MCF 10A (cell line): ENCODE measurements at regions of chr5 and their contacts with region 1.

Region 1: DNA sequence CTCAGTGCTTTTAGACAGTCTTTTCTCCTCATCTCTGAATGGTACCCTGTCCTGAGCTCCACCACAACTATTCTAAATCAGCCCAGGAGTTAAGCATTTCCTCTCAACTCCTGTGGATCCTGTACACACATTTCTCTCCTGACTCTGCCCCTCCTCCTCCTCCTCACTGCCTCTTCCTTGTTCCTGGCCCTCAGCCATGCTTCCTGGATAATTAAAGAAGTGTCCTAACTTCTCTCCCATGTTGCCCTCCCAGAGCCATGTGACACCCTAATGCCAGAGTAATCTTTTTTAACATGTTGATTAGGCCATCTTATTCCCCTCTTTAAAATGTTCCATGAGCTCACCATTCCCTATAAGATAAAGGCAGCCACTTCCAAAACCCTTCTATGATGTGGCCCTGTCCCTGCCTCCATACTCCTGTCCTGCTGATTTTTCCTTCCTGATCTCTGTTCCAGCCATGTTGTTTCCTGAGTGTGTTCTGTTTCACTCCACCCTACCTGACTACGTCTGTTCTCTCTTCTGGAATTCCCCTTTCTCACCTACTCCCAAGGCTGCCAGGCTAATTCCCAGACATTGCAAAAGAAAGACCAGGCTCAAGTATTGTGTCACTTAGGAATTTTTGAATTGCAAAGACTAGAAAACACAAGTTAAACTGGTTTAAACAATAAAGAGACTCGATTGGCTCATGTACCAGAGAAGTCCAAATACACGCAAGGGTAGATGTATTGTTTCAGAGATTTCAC is 295.2 kb downstream of the MAST4 start:
- DNase-seq: peak; percentile 95
- H3K4me3 Mint-ChIP-seq: peak overlapping the region; percentile 32
- H3K27ac Mint-ChIP-seq: peak overlapping the region; percentile 100
- H3K4me1 Mint-ChIP-seq: peaks cover 42% of the 10 kb centered on the region
- H3K27me3 Mint-ChIP-seq: no peaks in the 10 kb centered on the region
- CTCF ChIP-seq: no peak

Region 2: DNA sequence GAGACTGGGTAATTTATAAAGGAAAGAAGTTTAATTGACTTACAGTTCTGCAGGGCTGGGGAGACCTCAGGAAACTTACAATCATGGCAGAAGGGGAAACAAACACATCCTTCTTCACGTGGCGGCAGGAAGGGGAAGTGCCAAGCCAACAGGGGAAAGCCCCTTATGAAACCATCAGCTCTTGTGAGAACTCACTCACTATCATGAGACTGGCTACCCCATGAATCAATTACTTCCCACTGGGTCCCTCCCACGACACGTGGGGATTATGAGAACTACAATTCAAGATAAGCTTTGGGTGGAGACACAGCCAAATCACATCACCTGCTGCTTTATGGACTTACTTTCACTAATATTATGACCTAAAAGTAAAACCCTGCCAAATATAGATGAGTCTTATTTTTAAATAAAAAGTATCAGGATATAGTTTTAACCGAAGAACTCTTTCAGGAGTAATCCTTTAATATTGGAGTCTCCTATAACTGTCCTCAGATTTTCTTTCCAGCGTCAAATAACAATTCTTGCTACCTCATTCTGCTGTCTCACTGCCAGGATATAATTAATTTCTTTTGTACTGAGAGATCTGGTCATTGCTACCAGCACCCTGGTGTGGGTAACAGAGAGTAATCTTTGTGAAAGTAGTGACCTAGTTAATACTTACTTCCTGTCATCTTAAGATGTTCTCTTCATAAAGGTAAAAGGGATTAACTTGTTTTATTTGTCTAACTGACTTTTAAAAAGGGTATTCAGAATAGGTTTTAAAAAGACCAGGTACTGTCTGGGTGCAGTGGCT is 1100.8 kb before region 1 on chr5:
- CTCF ChIA-PET with region 1: no interaction called
- POLR2A ChIA-PET with region 1: no interaction called
- intact Hi-C with region 1: no loop called
- DNase-seq: no peak
- H3K4me3 Mint-ChIP-seq: no peak overlapping the region
- H3K27ac Mint-ChIP-seq: no peak overlapping the region
- H3K4me1 Mint-ChIP-seq: no peaks in the 10 kb centered on the region
- H3K27me3 Mint-ChIP-seq: no peaks in the 10 kb centered on the region
- CTCF ChIP-seq: no peak

Region 3: GRCh38 chr5:66498791-66499207 is 392.6 kb before region 1 on chr5:
- CTCF ChIA-PET with region 1: no interaction called
- POLR2A ChIA-PET with region 1: no interaction called
- intact Hi-C with region 1: no loop called
- DNase-seq: peak; percentile 41
- H3K4me3 Mint-ChIP-seq: no peak overlapping the region
- H3K27ac Mint-ChIP-seq: peak overlapping the region; percentile 8
- H3K4me1 Mint-ChIP-seq: peaks cover 7% of the 10 kb centered on the region
- H3K27me3 Mint-ChIP-seq: peaks cover 11% of the 10 kb centered on the region
- CTCF ChIP-seq: no peak

Region 4: GRCh38 chr5:66814146-66814991 is 77.0 kb before region 1 on chr5:
- CTCF ChIA-PET with region 1: interaction called, 11 read pairs
- POLR2A ChIA-PET with region 1: no interaction called
- intact Hi-C with region 1: no loop called
- DNase-seq: peak; percentile 69
- H3K4me3 Mint-ChIP-seq: no peak overlapping the region
- H3K27ac Mint-ChIP-seq: no peak overlapping the region
- H3K4me1 Mint-ChIP-seq: peaks cover 6% of the 10 kb centered on the region
- H3K27me3 Mint-ChIP-seq: no peaks in the 10 kb centered on the region
- CTCF ChIP-seq: peak; percentile 41

Region 5: GRCh38 chr5:66903709-66904108 is 12.4 kb after region 1 on chr5:
- CTCF ChIA-PET with region 1: interaction called, 3 read pairs
- POLR2A ChIA-PET with region 1: interaction called, 12 read pairs
- intact Hi-C with region 1: no loop called
- DNase-seq: no peak
- H3K4me3 Mint-ChIP-seq: no peak overlapping the region
- H3K27ac Mint-ChIP-seq: no peak overlapping the region
- H3K4me1 Mint-ChIP-seq: no peaks in the 10 kb centered on the region
- H3K27me3 Mint-ChIP-seq: no peaks in the 10 kb centered on the region
- CTCF ChIP-seq: no peak

Region 6: DNA sequence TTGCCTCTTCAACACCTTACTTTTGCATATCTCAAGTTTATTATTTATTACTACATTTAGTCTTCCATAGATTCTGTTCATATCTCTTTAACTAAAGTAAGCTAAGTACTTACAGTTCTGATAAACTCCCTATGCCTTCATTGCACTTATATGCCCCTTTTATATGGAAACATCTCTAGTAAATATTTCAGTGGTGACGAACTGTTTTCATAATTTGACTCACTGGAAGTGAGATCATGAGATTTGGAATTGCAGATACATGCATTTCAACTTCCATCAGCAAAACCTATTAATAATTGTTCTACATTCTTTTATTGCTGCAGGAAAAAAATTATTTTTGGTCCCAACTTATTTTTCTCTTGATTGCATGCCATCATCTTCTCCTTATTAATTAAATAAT is 41.7 kb after region 1 on chr5:
- CTCF ChIA-PET with region 1: interaction called, 3 read pairs
- POLR2A ChIA-PET with region 1: interaction called, 12 read pairs
- intact Hi-C with region 1: no loop called
- DNase-seq: peak; percentile 8
- H3K4me3 Mint-ChIP-seq: no peak overlapping the region
- H3K27ac Mint-ChIP-seq: no peak overlapping the region
- H3K4me1 Mint-ChIP-seq: peaks cover 10% of the 10 kb centered on the region
- H3K27me3 Mint-ChIP-seq: no peaks in the 10 kb centered on the region
- CTCF ChIP-seq: no peak